ENCODE measurements at regions of chr10 and their contacts with region 1.

Region 1: GRCh38 chr10:121886997-121887622 is 40.7 kb downstream of the ATE1 start:
- DNase-seq: peak; percentile 32 to 70 (median 43)
- ATAC-seq: peak; percentile 73 to 91 (median 82)
- H3K4me3 ChIP-seq: no peak overlapping the region
- H3K27ac ChIP-seq: no peak overlapping the region
- H3K4me1 ChIP-seq: no peaks in the 10 kb centered on the region
- H3K27me3 ChIP-seq: no peaks in the 10 kb centered on the region
- CTCF ChIP-seq: peak; percentile 57 to 77 (median 72)
- POLR2A ChIP-seq: no peak

Region 2: GRCh38 chr10:120942806-120943413 is 944.2 kb before region 1 on chr10:
- intact Hi-C with region 1: loop called (anchors 2 to 10 kb)
- DNase-seq: peak; percentile 69 to 86 (median 77)
- ATAC-seq: peak; percentile 55 to 94 (median 90)
- H3K4me3 ChIP-seq: peak overlapping the region in 3 of 12 donors; percentile 9 to 28 (median 12)
- H3K27ac ChIP-seq: no peak overlapping the region
- H3K4me1 ChIP-seq: peaks cover 0 to 7% (median 4%) of the 10 kb centered on the region in 12 donors
- H3K27me3 ChIP-seq: peaks cover 0 to 31% (median 0%) of the 10 kb centered on the region in 9 donors
- CTCF ChIP-seq: peak; percentile 79 to 90 (median 85)
- POLR2A ChIP-seq: no peak

Region 3: GRCh38 chr10:120948889-120949608 is 938.1 kb before region 1 on chr10:
- intact Hi-C with region 1: loop called in 7 of 10 experiments (anchors 5 to 10 kb)
- DNase-seq: peak; percentile 63 to 86 (median 70)
- ATAC-seq: peak; percentile 70 to 98 (median 96)
- H3K4me3 ChIP-seq: peak overlapping the region in 11 of 12 donors; percentile 28 to 58 (median 50)
- H3K27ac ChIP-seq: no peak overlapping the region
- H3K4me1 ChIP-seq: peaks cover 0 to 15% (median 10%) of the 10 kb centered on the region in 12 donors
- H3K27me3 ChIP-seq: peaks cover 0 to 51% (median 23%) of the 10 kb centered on the region in 9 donors
- CTCF ChIP-seq: peak; percentile 84 to 94 (median 88)
- POLR2A ChIP-seq: no peak

Region 4: GRCh38 chr10:121539786-121540185 is 347.3 kb before region 1 on chr10:
- intact Hi-C with region 1: no loop called
- DNase-seq: no peak
- ATAC-seq: no peak
- H3K4me3 ChIP-seq: no peak overlapping the region
- H3K27ac ChIP-seq: no peak overlapping the region
- H3K4me1 ChIP-seq: no peaks in the 10 kb centered on the region
- H3K27me3 ChIP-seq: no peaks in the 10 kb centered on the region
- CTCF ChIP-seq: no peak
- POLR2A ChIP-seq: no peak

Region 5: GRCh38 chr10:121615435-121615793 is 271.7 kb before region 1 on chr10:
- intact Hi-C with region 1: loop called in 1 of 10 experiments (anchors 10 kb)
- DNase-seq: peak in 3 of 5 donors; percentile 41 to 47 (median 42)
- ATAC-seq: peak in 3 of 4 donors; percentile 32 to 82 (median 77)
- H3K4me3 ChIP-seq: no peak overlapping the region
- H3K27ac ChIP-seq: peak overlapping the region in 2 of 12 donors; percentile 1 to 20
- H3K4me1 ChIP-seq: no peaks in the 10 kb centered on the region
- H3K27me3 ChIP-seq: peaks cover 0 to 11% (median 0%) of the 10 kb centered on the region in 9 donors
- CTCF ChIP-seq: no peak
- POLR2A ChIP-seq: no peak

Region 6: GRCh38 chr10:121823993-121824463 is 63.1 kb before region 1 on chr10:
- intact Hi-C with region 1: loop called in 1 of 10 experiments (anchors 5 kb)
- DNase-seq: no peak
- ATAC-seq: peak in 2 of 4 donors; percentile 34 to 58
- H3K4me3 ChIP-seq: no peak overlapping the region
- H3K27ac ChIP-seq: no peak overlapping the region
- H3K4me1 ChIP-seq: peaks cover 0 to 7% (median 0%) of the 10 kb centered on the region in 12 donors
- H3K27me3 ChIP-seq: no peaks in the 10 kb centered on the region
- CTCF ChIP-seq: peak; percentile 49 to 76 (median 66)
- POLR2A ChIP-seq: no peak

Region 7: DNA sequence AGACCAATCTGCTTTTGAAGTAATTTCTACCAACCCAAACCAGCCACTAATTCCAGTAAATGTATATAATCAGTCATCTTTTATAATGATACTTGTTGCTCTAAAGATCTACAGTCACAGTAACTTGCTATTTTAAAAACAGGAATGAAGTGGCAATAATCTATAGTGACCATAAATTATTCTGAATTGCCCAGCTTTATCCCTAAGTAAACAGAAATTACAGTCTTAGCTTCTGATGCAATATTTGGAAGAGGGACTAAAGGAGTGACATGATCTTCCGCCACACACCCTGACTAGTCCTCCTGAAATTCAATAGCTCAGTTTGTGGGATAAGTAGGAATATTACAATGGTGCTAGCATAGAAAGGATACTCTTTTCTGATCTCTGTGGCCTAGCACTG is 55.3 kb before region 1 on chr10:
- intact Hi-C with region 1: loop called in 1 of 10 experiments (anchors 5 kb)
- DNase-seq: no peak
- ATAC-seq: no peak
- H3K4me3 ChIP-seq: no peak overlapping the region
- H3K27ac ChIP-seq: no peak overlapping the region
- H3K4me1 ChIP-seq: peaks cover 0 to 8% (median 0%) of the 10 kb centered on the region in 12 donors
- H3K27me3 ChIP-seq: no peaks in the 10 kb centered on the region
- CTCF ChIP-seq: no peak
- POLR2A ChIP-seq: no peak